SK-N-SH (cell line): ENCODE measurements at regions of chr18 and their contacts with region 1.

Region 1: DNA sequence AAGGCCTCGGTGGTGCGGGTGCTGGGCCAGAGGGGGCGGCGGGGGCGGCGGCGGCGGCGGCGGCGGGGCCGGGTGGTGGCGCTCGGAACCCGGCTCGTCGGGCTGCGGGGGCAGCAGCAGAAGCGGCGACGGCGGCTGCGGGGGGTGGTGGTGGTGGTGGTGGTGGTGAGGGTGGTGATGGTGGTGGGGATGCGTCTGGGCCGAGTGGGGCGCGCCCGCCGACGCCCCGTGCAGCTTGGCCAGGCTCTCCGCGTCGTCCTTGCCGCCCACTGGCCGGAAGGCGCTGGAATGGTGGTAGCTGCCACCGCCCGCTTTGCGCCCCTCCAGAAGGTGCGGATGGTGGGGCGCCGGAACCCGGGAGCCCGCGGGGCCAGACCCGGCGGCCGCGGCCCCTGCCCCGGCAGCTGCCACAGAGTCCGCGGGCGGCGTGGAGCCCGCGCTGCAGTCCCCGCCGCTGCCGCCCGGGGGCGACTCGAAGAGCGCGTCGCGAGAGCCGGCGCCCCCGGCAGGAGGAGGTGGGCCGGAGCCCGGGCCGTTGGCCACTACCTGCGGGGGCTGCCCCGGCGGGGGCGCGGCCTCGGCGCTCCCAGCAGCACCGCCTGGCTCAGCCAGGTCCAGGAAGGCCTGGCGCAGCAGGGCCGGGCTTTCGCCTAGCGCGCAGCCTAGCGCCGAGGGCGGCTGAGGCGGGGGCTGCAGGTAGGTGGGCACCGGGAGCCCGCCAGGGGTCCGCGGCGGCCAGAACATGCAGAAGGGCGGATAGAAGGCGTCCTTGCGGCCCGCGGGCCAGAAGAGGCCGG is 4.2 kb downstream of the SKOR2 start:
- DNase-seq: peak; percentile 90
- H3K4me3 ChIP-seq: peak overlapping the region in 1 of 2 experiments; percentile 9; a peak in 1 of 4 replicates
- H3K27ac ChIP-seq: no peak overlapping the region
- H3K4me1 ChIP-seq: peaks cover 0 to 7% of the 10 kb centered on the region in 2 experiments; a peak in 1 of 4 replicates
- H3K27me3 ChIP-seq: peaks cover 51% of the 10 kb centered on the region
- CTCF ChIP-seq: peak; percentile 41
- EP300 ChIP-seq: no peak
- RAD21 ChIP-seq: peak; percentile 32

Region 2: DNA sequence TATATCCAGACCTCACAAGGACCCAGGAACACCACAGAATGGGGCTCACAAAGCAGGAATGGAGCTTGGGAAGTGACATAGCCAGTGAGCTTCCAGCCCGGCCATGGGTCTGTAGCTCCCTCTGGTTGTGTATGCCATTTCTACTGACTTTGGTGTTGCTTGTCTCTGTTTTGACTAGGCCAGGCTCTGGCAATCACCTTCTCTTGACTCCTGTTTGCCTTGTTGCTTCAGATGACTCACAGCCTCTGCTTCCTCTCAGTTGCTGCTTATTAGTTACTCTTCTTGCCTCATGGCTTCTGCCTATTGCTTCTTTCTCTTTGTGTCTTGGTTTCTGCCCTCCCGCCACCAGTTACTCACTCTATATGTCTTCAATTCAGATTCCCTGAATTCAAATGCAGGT is 55.3 kb before region 1 on chr18:
- CTCF ChIA-PET with region 1: no interaction called
- POLR2A ChIA-PET with region 1: no interaction called
- DNase-seq: no peak
- H3K4me3 ChIP-seq: no peak overlapping the region
- H3K27ac ChIP-seq: no peak overlapping the region
- H3K4me1 ChIP-seq: no peaks in the 10 kb centered on the region
- H3K27me3 ChIP-seq: no peaks in the 10 kb centered on the region
- CTCF ChIP-seq: no peak
- EP300 ChIP-seq: no peak
- RAD21 ChIP-seq: no peak

Region 3: DNA sequence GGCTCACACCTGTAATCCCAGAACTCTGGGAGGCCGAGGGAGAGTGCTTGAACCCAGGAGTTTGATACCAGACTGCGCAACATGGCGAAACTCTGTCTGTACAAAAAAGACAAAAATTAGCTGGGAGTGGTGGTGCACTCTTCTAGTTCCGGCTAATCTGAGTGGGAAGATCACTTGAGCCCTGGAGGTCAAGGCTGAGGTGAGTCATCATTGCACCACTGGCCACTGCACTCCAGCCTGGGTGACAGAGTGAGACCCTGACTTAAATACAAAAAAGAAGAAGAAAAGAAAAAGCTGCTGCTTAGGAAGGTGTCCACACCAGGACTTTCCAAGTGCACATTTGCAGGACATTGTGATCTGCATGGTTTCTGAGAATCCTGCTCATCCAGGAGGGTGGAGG is 12.1 kb before region 1 on chr18:
- CTCF ChIA-PET with region 1: interaction called, 16 read pairs
- POLR2A ChIA-PET with region 1: no interaction called
- DNase-seq: no peak
- H3K4me3 ChIP-seq: no peak overlapping the region
- H3K27ac ChIP-seq: no peak overlapping the region
- H3K4me1 ChIP-seq: no peaks in the 10 kb centered on the region
- H3K27me3 ChIP-seq: no peaks in the 10 kb centered on the region
- CTCF ChIP-seq: no peak
- EP300 ChIP-seq: no peak
- RAD21 ChIP-seq: no peak

Region 4: GRCh38 chr18:47260120-47260923 is 13.1 kb after region 1 on chr18:
- CTCF ChIA-PET with region 1: interaction called, 135 read pairs
- POLR2A ChIA-PET with region 1: no interaction called
- DNase-seq: peak; percentile 78
- H3K4me3 ChIP-seq: no peak overlapping the region
- H3K27ac ChIP-seq: no peak overlapping the region
- H3K4me1 ChIP-seq: peaks cover 0 to 8% of the 10 kb centered on the region in 2 experiments; a peak in 1 of 4 replicates
- H3K27me3 ChIP-seq: peaks cover 30% of the 10 kb centered on the region; the same call in 1 of the 2 replicates
- CTCF ChIP-seq: no peak
- EP300 ChIP-seq: no peak
- RAD21 ChIP-seq: peak; percentile 12; the same call in 1 of the 2 replicates

Region 5: DNA sequence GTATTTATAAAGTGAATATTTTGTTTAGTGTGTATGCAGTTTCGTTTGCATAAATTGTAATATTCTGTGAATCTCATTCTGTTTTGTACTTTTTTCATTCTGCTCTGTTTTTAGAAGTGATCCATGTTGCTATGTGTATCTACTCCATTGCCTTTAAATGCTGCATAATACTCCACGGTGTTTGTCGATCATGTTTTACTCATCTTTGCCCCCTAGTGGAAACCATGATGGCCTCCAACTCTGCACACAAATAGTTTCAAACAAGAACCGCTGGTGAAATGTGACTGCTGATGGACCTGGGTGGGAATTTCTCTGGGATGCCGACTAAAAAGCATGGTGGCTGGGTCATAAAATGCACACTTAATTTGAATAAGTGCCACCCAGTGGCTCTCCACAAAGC is 36.2 kb after region 1 on chr18:
- CTCF ChIA-PET with region 1: interaction called, 10 read pairs
- POLR2A ChIA-PET with region 1: no interaction called
- DNase-seq: peak; percentile 41
- H3K4me3 ChIP-seq: no peak overlapping the region
- H3K27ac ChIP-seq: no peak overlapping the region
- H3K4me1 ChIP-seq: no peaks in the 10 kb centered on the region
- H3K27me3 ChIP-seq: no peaks in the 10 kb centered on the region
- CTCF ChIP-seq: peak; percentile 74
- EP300 ChIP-seq: no peak
- RAD21 ChIP-seq: peak; percentile 57